ENCODE measurements at regions of chr1 and their contacts with region 1.

Region 1: DNA sequence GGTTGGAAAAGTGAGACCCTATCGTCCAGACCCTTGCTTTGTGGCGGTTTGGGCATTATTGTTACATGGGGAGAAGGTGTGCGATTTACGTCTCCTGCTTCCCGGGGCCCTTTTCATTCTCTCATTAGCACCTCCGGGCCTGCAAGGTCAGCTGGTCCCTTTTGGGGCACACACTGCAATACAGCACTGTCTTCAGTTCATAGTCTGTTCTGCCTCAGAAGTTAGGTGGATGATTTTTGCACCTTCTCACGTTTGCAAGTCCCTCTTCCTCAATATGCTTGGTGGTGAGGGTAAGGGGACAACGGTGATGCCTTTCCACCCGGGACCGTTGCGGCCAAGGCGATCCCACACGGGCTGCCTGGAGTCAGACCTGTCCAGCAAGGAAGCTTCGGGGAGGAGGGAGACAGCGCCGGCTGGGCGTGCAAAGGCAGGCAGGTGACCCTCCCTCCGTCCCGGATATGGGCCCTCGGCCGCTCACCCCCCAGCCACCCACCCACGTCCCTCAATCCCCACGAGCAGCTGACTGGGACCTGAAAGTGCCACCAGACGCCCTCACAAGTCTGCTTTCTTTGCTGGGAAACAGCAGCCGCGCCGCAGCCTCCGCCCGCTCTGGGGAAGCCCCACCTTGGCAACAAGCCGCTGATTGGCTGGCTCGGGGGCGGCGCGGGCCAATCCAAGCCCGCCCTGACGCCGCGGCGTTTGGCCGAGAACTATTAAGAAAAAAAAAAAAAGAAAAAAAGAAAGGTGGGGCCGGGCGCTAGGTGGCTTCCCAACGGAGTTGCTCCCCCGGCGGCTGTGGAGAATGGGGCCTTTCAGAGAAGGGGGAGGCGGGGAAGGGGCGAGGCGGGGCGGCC is 21.7 kb downstream of the BTG2 start:
- DNase-seq: peak; percentile 97
- ATAC-seq: peak; percentile 84
- H3K4me3 Mint-ChIP-seq: peak overlapping the region; percentile 72
- H3K27ac Mint-ChIP-seq: peak overlapping the region; percentile 96
- H3K4me1 Mint-ChIP-seq: peaks cover 66% of the 10 kb centered on the region
- H3K27me3 Mint-ChIP-seq: no peaks in the 10 kb centered on the region

Region 2: DNA sequence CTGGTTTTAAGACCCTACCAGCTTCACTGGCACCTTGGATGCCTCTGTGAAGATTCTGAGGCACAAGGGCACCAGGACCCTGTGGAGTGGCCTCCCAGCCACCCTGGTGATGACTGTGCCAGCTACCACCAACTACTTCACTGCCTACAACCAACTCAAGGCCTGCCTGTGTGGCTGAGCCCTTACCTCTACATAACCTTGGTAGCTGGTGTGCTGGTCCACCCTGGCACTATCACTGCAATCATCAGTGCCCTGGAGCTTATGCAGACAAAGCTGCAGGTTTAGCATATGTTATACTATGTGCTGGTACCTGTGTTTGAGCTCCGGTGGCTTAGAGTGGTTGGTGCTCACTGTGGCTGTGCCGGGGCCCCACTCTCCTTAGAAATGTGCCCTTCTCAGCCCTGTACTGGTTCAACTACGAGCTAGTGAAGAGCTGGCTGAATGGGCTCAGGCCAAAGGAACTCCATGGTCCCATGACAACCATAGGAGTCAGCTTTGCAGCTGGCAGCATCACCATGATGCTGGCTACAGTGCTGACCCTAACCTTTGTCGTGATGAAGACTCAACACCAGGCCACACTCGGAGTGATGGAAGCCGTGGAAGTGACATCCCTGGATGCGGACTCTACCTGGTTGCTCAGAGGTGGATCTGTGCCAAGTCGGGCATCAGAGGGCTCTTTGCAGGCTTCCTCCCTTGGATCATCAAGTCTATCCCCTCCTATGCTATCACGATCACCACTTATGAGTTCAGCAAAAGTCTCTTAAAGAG is 530.6 kb before region 1 on chr1:
- CTCF ChIA-PET with region 1: no interaction called
- POLR2A ChIA-PET with region 1: no interaction called
- intact Hi-C with region 1: no loop called
- DNase-seq: no peak
- ATAC-seq: no peak
- H3K4me3 Mint-ChIP-seq: no peak overlapping the region
- H3K27ac Mint-ChIP-seq: no peak overlapping the region
- H3K4me1 Mint-ChIP-seq: peaks cover 30% of the 10 kb centered on the region
- H3K27me3 Mint-ChIP-seq: no peaks in the 10 kb centered on the region

Region 3: DNA sequence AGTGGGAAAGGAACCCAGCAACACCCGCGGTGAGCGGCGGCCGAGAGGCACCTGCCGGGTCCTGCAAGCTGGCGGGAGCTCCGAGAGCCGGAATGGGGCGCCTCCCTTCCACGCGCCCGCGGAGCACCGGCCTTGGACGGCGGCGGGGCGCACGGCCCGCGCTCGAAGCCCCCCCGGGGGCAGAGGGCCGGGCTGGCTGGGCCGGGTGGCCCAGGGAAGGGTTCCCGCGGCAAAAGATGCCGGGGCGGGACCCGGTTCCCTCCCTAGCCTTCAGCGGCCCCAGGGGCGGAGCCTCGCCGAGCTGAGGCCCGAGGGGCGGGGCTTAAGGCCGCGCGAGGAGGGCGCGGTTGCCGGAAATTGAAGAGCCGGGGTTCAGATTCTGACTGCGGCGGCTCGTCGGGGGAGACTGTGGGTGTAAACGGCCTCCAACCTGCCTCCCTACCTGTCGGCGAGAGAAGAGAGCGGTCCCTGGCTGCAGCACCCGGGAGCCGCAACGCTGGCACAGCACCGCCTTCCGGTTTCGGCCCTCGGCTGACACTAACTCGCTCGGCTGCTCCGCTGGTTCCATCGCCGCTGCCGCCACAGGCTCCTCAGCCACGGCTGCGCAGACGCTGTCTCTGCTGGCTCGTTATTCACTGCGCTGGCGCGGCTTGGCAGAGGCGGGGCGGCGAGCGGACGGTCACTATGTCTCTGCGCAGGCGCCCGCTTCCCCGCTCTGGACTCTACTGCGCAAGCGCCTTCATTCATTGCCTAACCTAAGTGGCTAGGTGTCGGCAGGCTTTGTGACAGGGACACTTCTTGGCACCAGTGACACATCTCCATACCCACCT is 438.3 kb before region 1 on chr1 and contains the start of gene RABIF:
- CTCF ChIA-PET with region 1: no interaction called
- POLR2A ChIA-PET with region 1: no interaction called
- intact Hi-C with region 1: loop called in 1 of 2 experiments (anchors 1 kb)
- DNase-seq: peak; percentile 98
- ATAC-seq: peak; percentile 94
- H3K4me3 Mint-ChIP-seq: peak within 1 kb of the TSS; percentile 91
- H3K27ac Mint-ChIP-seq: peak within 1 kb of the TSS; percentile 96
- H3K4me1 Mint-ChIP-seq: peaks cover 15% of the 10 kb centered on the region
- H3K27me3 Mint-ChIP-seq: no peaks in the 10 kb centered on the region
- total RNA-seq, gene RABIF: 6.8 to 7.4 TPM

Region 4: GRCh38 chr1:203038891-203039608 is 288.0 kb before region 1 on chr1:
- CTCF ChIA-PET with region 1: no interaction called
- POLR2A ChIA-PET with region 1: no interaction called
- intact Hi-C with region 1: no loop called
- DNase-seq: peak; percentile 77
- ATAC-seq: peak; percentile 85
- H3K4me3 Mint-ChIP-seq: no peak overlapping the region
- H3K27ac Mint-ChIP-seq: no peak overlapping the region
- H3K4me1 Mint-ChIP-seq: peaks cover 4% of the 10 kb centered on the region
- H3K27me3 Mint-ChIP-seq: peaks cover 4% of the 10 kb centered on the region

Region 5: GRCh38 chr1:203273206-203273868 is 53.7 kb before region 1 on chr1:
- CTCF ChIA-PET with region 1: interaction called, 710 read pairs
- POLR2A ChIA-PET with region 1: interaction called, 8 read pairs
- intact Hi-C with region 1: loop called (anchors 1 kb)
- DNase-seq: peak; percentile 96
- ATAC-seq: peak; percentile 78
- H3K4me3 Mint-ChIP-seq: peak overlapping the region; percentile 70
- H3K27ac Mint-ChIP-seq: peak overlapping the region; percentile 78
- H3K4me1 Mint-ChIP-seq: peaks cover 65% of the 10 kb centered on the region
- H3K27me3 Mint-ChIP-seq: no peaks in the 10 kb centered on the region

Region 6: DNA sequence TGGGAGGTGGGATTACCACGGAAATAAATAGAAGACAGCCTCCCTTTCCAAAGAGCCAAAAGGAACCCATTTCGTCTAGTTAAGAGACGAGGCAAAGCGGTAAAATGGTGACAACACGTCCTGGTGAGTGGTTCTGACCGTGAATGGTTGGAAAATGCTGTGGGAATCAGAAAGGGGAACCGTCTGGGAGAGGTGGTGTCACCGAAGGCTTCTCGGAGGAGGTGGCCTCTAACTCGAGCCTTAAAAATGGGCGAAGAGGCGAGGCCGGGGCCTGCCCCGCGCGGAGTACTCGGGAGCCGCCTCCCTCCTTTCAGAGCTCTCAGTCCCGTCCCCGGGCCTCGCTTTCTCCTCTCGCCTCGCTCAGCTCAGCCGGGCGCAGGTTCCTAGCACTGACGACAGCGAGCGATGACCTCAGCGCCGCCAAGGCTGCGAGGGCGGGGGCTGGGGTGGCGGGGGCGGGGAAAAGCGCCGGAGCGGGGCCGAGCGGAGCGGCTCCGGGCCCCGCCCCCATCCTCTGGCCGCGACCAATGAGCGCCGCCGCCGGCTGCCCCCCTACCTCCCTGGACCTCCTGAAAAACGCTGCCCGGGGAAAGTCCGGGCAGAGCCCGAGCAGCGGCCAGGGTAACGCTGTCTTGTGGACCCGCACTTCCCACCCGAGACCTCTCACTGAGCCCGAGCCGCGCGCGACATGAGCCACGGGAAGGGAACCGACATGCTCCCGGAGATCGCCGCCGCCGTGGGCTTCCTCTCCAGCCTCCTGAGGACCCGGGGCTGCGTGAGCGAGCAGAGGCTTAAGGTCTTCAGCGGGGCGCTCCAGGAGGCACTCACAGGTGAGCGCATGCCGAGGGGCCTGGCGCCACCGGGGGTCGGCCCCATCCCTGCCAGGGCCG is 21.9 kb before region 1 on chr1 and contains the start of gene BTG2:
- CTCF ChIA-PET with region 1: interaction called, 143 read pairs
- POLR2A ChIA-PET with region 1: interaction called, 97 read pairs
- intact Hi-C with region 1: loop called (anchors 1 kb)
- DNase-seq: peak; percentile 96
- ATAC-seq: peak; percentile 88
- H3K4me3 Mint-ChIP-seq: peak within 1 kb of the TSS; percentile 98
- H3K27ac Mint-ChIP-seq: peak within 1 kb of the TSS; percentile 97
- H3K4me1 Mint-ChIP-seq: peaks cover 54% of the 10 kb centered on the region
- H3K27me3 Mint-ChIP-seq: no peaks in the 10 kb centered on the region
- total RNA-seq, gene BTG2: 114 to 142 TPM

Region 7: GRCh38 chr1:203361945-203362719 is 35.1 kb after region 1 on chr1:
- CTCF ChIA-PET with region 1: no interaction called
- POLR2A ChIA-PET with region 1: no interaction called
- intact Hi-C with region 1: no loop called
- DNase-seq: no peak
- ATAC-seq: no peak
- H3K4me3 Mint-ChIP-seq: no peak overlapping the region
- H3K27ac Mint-ChIP-seq: no peak overlapping the region
- H3K4me1 Mint-ChIP-seq: no peaks in the 10 kb centered on the region
- H3K27me3 Mint-ChIP-seq: peaks cover 10% of the 10 kb centered on the region

Region 8: DNA sequence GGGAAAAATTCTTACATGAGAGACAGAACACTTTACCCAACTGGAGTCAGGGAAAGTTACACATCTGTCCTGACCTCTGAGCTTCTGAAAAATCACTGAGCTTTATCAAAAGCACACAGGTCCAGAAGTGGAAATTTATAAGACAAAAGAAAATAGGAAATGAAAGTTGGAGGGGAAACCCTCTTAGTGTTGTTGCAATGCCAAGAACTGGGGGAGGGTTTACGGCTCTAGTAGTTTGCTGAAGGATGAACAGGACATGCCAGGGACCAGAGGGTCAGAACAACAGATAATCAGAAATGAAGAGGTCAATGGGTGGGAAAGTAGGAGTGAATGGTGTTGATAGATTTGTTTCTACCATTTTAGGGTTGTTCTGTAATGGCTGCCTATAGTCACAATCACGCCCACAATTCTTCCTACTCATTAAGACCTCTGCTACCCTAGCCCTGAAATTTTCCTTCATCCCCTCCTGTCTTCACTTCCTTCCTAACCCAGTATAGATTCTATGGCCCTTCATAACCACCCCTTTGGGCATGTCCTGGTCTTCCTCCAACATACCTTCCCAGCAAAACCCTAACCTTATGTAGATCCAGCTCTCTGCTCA is 54.2 kb after region 1 on chr1:
- CTCF ChIA-PET with region 1: no interaction called
- POLR2A ChIA-PET with region 1: no interaction called
- intact Hi-C with region 1: no loop called
- DNase-seq: no peak
- ATAC-seq: no peak
- H3K4me3 Mint-ChIP-seq: no peak overlapping the region
- H3K27ac Mint-ChIP-seq: no peak overlapping the region
- H3K4me1 Mint-ChIP-seq: no peaks in the 10 kb centered on the region
- H3K27me3 Mint-ChIP-seq: peaks cover 8% of the 10 kb centered on the region

Region 9: GRCh38 chr1:203769505-203770343 is 442.7 kb after region 1 on chr1:
- CTCF ChIA-PET with region 1: no interaction called
- POLR2A ChIA-PET with region 1: no interaction called
- intact Hi-C with region 1: loop called in 1 of 2 experiments (anchors 5 kb)
- DNase-seq: no peak
- ATAC-seq: no peak
- H3K4me3 Mint-ChIP-seq: no peak overlapping the region
- H3K27ac Mint-ChIP-seq: peak overlapping the region; percentile 59
- H3K4me1 Mint-ChIP-seq: peaks cover 25% of the 10 kb centered on the region
- H3K27me3 Mint-ChIP-seq: no peaks in the 10 kb centered on the region

Region 10: GRCh38 chr1:205284343-205285144 is 1957.5 kb after region 1 on chr1:
- CTCF ChIA-PET with region 1: no interaction called
- POLR2A ChIA-PET with region 1: no interaction called
- intact Hi-C with region 1: loop called in 1 of 2 experiments (anchors 10 kb)
- DNase-seq: peak; percentile 92
- ATAC-seq: peak; percentile 73
- H3K4me3 Mint-ChIP-seq: peak overlapping the region; percentile 55
- H3K27ac Mint-ChIP-seq: peak overlapping the region; percentile 92
- H3K4me1 Mint-ChIP-seq: peaks cover 82% of the 10 kb centered on the region
- H3K27me3 Mint-ChIP-seq: no peaks in the 10 kb centered on the region